AG04449 (cell line): ENCODE measurements at regions of chr4 and their contacts with region 1.

Region 1: GRCh38 chr4:2763511-2763967 is 7.4 kb upstream of the TNIP2 start:
- DNase-seq: no peak
- H3K4me3 ChIP-seq: peak overlapping the region; percentile 60
- CTCF ChIP-seq: no peak

Region 2: DNA sequence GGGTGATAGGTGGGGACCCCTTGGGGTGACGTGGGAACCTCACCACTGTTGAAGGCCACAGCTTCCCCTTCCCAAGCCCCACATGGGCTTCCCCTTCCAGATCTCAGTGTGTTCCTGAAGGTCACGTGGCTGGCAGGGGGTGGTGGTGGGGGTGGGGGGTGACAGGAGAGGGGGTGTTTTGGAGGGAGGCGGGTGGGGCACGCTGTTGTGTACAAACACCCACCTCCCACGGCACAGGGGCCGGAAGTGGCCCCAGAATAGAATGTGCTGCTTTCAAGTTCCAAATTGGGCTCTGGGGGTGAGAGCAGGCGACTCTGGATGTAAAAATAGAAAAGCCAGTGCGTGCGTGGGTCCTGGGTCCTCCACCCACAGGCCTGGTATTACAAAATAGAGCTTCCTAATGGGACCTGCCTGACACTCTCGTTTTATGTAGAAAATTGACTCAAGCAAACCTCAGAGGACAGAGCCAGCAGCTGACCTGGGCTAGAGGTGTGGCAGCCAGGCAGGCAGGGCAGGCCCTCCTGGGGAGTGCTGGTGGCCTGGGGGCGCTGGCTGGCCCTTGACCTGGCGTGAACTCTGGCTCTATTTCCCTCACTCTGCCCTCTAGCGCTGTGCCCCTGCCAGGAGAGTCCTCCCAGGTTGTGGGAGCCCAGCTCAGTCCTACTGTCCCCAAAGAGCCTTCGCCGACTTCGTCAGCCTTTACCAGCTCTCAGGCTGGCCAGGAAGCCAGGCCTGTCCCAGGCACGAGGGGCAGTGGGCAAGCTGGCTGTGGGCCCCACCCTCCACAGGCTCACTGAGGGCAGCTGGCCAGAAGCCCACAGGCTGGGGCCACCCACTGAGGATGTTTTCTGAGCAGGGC is 23.9 kb after region 1 on chr4:
- CTCF ChIA-PET with region 1: interaction called, 10 read pairs
- POLR2A ChIA-PET with region 1: no interaction called
- DNase-seq: no peak
- H3K4me3 ChIP-seq: no peak overlapping the region
- CTCF ChIP-seq: no peak

Region 3: GRCh38 chr4:2891294-2891693 is 127.8 kb after region 1 on chr4:
- CTCF ChIA-PET with region 1: interaction called, 12 read pairs
- POLR2A ChIA-PET with region 1: interaction called, 3 read pairs
- DNase-seq: peak; percentile 12
- H3K4me3 ChIP-seq: no peak overlapping the region
- CTCF ChIP-seq: no peak

Region 4: GRCh38 chr4:2910409-2910808 is 146.9 kb after region 1 on chr4:
- CTCF ChIA-PET with region 1: interaction called, 14 read pairs
- POLR2A ChIA-PET with region 1: no interaction called
- DNase-seq: no peak
- H3K4me3 ChIP-seq: no peak overlapping the region
- CTCF ChIP-seq: no peak